ENCODE measurements at regions of chr4 and their contacts with region 1.

Region 1: DNA sequence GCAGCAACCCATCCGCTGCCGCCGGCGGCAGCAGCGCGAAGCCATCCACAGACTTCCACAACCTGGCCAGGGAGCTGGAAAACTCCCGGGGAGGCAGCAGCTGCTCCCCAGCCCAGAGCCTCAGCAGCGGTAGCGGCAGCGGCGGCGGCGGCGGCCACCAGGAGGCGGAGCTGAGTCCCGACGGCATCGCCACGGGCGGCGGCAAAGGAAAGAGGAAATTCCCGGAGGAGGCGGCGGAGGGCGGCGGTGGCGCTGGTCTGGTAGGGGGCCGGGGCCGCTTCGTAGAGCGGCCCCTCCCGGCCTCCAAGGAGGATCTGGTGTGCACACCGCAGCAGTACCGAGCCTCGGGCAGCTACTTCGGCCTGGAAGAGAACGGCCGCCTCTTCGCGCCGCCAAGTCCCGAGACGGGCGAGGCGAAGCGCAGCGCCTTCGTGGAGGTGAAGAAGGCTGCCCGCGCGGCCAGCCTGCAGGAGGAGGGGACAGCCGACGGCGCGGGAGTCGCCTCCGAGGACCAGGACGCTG is 4.9 kb downstream of the PRDM8 start:
- DNase-seq: peak; percentile 62 to 82 (median 73)
- ATAC-seq: peak; percentile 63 to 64
- H3K4me3 Mint-ChIP-seq: peak overlapping the region; percentile 70 to 90 (median 82)
- H3K27ac Mint-ChIP-seq: peak overlapping the region in 8 of 10 donors; percentile 25 to 85 (median 77)
- H3K4me1 Mint-ChIP-seq: peaks cover 18 to 29% (median 23%) of the 10 kb centered on the region in 4 donors
- H3K27me3 Mint-ChIP-seq: peaks cover 9 to 15% (median 11%) of the 10 kb centered on the region in 5 donors

Region 2: DNA sequence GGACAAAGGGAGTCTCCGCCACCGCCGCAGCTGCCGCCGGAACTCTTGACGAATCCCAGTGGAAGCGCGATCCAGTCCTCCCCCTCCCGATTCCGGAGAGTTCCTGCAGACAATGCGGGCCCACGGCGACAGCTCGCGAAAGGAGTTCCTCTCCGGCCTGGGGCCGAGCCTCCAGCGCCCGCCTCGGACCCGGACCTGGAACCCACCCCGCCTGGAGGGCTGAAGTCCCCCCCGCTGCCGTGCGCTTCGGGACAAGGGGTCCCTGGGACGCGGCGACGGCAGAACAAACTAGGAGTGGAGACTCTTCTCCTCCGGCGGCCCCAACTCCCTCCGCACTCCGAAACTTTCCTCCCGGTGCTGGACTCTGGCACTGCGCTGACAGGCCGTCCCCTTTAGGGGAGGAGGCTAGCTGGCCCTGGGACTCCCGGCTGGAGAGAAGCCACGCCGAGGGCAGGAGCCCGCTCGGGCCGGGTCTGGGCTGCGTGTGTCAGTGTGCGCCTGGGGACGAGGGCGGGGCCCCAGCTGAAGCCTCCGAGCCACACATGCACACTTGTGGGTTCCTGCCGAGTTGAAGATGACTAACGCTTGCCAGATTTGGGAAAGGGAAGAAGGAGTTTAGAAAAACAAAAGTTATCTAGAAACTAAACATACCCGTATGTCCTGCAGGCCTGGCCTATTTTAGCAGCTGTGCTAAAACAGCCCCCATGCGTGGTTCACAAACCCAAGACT is 129.3 kb before region 1 on chr4 and contains the start of gene ANTXR2:
- POLR2A ChIA-PET with region 1: interaction called, 11 read pairs
- DNase-seq: peak; percentile 41 to 71 (median 48)
- ATAC-seq: peak; percentile 73 to 77
- H3K4me3 Mint-ChIP-seq: peak within 1 kb of the TSS; percentile 88 to 99 (median 97)
- H3K27ac Mint-ChIP-seq: peak within 1 kb of the TSS; percentile 87 to 99 (median 97)
- H3K4me1 Mint-ChIP-seq: peaks cover 18 to 74% (median 45%) of the 10 kb centered on the region in 4 donors
- H3K27me3 Mint-ChIP-seq: no peaks in the 10 kb centered on the region
- polyA plus RNA-seq, gene ANTXR2: 11.4 to 22.1 (median 11.5) TPM

Region 3: GRCh38 chr4:80101792-80102116 is 100.5 kb before region 1 on chr4:
- POLR2A ChIA-PET with region 1: no interaction called
- DNase-seq: no peak
- ATAC-seq: no peak
- H3K4me3 Mint-ChIP-seq: no peak overlapping the region
- H3K27ac Mint-ChIP-seq: no peak overlapping the region
- H3K4me1 Mint-ChIP-seq: peaks cover 0 to 4% (median 2%) of the 10 kb centered on the region in 4 donors
- H3K27me3 Mint-ChIP-seq: no peaks in the 10 kb centered on the region

Region 4: DNA sequence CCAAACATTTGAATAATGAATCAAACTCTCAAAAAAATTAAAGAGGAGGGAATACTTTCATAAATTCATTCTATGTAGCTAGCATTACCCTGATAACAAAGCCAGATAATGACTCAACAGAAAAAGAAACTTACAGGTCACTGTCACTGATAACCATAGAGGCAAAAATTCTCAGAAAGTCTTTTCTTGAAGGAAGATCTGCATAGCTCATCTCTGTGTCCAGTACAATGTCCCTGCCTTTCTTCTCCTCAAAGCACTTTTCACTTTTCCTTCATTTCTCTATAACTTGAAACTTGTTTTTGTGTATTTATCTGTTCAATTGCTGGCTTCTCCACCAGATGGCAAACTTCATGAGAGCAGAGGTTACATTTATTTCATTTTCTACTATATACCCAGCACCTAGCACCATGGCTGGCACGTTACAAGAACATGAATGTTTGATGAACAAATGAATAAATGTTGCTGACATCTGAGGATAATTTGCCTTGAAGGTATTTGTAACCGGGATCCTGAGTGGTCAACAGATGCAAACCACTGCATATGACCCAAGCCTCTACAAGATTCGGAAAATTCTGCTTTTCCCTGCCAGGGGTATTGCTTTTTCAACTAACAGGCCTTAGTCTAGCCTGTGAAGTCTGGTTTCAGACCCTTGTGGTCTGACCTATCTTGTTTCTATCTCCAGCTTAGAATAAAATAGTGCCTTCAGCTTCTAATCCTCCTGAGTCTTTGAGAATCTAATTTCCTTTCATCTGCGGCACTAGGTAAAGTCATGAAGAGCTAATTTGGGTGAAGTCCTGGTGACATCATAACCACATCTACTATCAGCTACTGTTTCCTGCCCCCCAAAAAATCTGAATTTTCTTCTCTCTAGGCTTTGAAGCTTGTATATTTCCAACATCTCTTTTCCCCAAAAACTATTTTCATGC is 76.7 kb before region 1 on chr4:
- POLR2A ChIA-PET with region 1: interaction called, 18 read pairs
- DNase-seq: peak in 9 of 10 donors; percentile 3 to 73 (median 48)
- ATAC-seq: peak; percentile 90 to 93
- H3K4me3 Mint-ChIP-seq: peak overlapping the region; percentile 9 to 59 (median 49)
- H3K27ac Mint-ChIP-seq: peak overlapping the region; percentile 74 to 96 (median 91)
- H3K4me1 Mint-ChIP-seq: peaks cover 19 to 54% (median 45%) of the 10 kb centered on the region in 4 donors
- H3K27me3 Mint-ChIP-seq: no peaks in the 10 kb centered on the region

Region 5: DNA sequence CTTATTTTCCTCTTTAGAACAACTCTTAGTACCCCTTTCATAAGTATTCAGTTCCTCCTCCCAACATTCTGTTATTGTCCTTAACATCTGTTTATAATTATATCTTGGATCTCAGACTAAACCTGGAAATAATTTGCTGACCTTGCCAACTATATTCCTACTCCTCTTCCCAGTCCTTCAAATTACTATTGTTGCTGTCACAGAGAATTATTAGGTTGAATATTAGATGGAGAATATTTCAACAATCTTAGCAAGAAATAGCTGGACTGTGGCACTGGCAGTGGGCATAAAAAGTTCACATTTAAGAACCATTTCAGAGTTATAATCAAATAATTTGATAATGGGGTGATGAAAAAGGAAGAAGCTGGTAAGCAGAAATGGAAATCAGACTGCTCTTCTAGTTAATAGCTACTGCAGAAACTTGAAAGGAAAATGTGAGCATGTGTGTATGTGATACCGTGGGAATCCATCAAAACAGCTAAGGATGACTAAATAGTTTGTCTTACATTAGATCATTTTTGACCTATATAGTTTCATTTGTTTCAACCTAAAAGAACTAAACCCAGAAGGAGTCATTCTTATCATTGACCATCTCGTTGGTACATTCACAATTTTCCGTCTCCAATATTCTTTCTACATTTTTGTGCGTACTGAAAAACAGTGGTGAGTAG is 48.2 kb before region 1 on chr4:
- POLR2A ChIA-PET with region 1: no interaction called
- DNase-seq: no peak
- ATAC-seq: no peak
- H3K4me3 Mint-ChIP-seq: no peak overlapping the region
- H3K27ac Mint-ChIP-seq: peak overlapping the region in 2 of 10 donors; percentile 7 to 57
- H3K4me1 Mint-ChIP-seq: no peaks in the 10 kb centered on the region
- H3K27me3 Mint-ChIP-seq: no peaks in the 10 kb centered on the region

Region 6: GRCh38 chr4:80560337-80560736 is 358.1 kb after region 1 on chr4:
- POLR2A ChIA-PET with region 1: no interaction called
- DNase-seq: no peak
- ATAC-seq: no peak
- H3K4me3 Mint-ChIP-seq: no peak overlapping the region
- H3K27ac Mint-ChIP-seq: peak overlapping the region in 1 of 10 donors; percentile 46
- H3K4me1 Mint-ChIP-seq: peaks cover 0 to 7% (median 5%) of the 10 kb centered on the region in 4 donors
- H3K27me3 Mint-ChIP-seq: peaks cover 0 to 2% (median 0%) of the 10 kb centered on the region in 5 donors